T-cell (primary cell): ENCODE measurements at regions of chr9 and their contacts with region 1.

Region 1: GRCh38 chr9:35790385-35791296 is 750 bp upstream of the NPR2 start:
- DNase-seq: peak; percentile 14 to 82 (median 49)
- ATAC-seq: peak; percentile 81 to 92 (median 86)
- H3K4me3 ChIP-seq: no peak overlapping the region
- H3K4me3 Mint-ChIP-seq: no peak overlapping the region
- H3K27ac ChIP-seq: no peak overlapping the region
- H3K27ac Mint-ChIP-seq: no peak overlapping the region
- H3K4me1 ChIP-seq: peaks cover 0 to 3% of the 10 kb centered on the region in 2 experiments
- H3K4me1 Mint-ChIP-seq: peaks cover 0 to 14% (median 13%) of the 10 kb centered on the region in 3 donors
- H3K27me3 ChIP-seq: no peaks in the 10 kb centered on the region
- H3K27me3 Mint-ChIP-seq: no peaks in the 10 kb centered on the region

Region 2: GRCh38 chr9:35882263-35882848 is 91.7 kb after region 1 on chr9:
- CTCF ChIA-PET with region 1: interaction called, 10 to 26 read pairs
- POLR2A ChIA-PET with region 1: no interaction called
- DNase-seq: peak; percentile 27 to 88 (median 74)
- ATAC-seq: peak in 3 of 4 experiments; percentile 46 to 74 (median 67)
- H3K4me3 ChIP-seq: no peak overlapping the region
- H3K4me3 Mint-ChIP-seq: no peak overlapping the region
- H3K27ac ChIP-seq: no peak overlapping the region
- H3K27ac Mint-ChIP-seq: no peak overlapping the region
- H3K4me1 ChIP-seq: no peaks in the 10 kb centered on the region
- H3K4me1 Mint-ChIP-seq: no peaks in the 10 kb centered on the region
- H3K27me3 ChIP-seq: no peaks in the 10 kb centered on the region
- H3K27me3 Mint-ChIP-seq: peaks cover 5% of the 10 kb centered on the region in 2 donors